Activated B cell treated with CpG ODN at 0.5 μM for 24 hours (primary cell): ENCODE measurements at regions of chr1 and their contacts with region 1.

Region 1: DNA sequence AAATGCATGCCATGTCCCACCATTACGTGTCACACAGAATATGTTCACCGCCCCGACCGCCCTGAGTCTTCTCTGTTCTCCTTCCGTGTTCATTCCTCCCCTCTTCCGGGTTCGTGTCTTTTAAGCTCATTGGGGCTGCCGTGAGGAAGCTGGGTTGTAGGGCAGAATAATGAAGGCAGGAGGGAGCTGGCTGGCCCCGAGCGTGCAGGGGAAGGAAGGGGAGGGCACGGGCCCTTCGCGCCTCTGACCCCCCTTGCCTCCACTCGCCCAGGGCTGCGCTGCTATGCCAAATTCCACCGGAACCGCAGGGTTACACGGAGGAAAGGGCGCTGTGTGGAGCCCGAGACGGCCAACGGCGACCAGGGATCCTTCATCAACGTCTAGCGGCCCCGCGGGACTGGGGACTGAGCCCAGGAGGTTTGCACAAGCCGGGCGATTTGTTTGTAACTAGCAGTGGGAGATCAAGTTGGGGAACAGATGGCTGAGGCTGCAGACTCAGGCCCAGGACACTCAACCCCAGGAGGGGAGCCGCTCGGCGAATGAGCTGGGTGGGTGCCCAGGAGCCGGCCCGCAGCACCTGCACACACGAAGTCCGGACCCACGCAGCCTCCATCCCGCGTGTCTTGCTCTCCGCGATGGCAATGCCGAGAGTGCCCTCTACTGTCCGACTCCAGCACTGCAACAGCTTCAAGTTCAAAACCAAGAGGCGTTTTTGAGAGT is 16.5 kb upstream of the AGTRAP start:
- DNase-seq: peak; percentile 78
- ATAC-seq: peak; percentile 89
- H3K4me3 Mint-ChIP-seq: peak overlapping the region; percentile 86
- H3K27ac Mint-ChIP-seq: peak overlapping the region; percentile 94
- H3K4me1 Mint-ChIP-seq: peaks cover 13% of the 10 kb centered on the region
- H3K27me3 Mint-ChIP-seq: no peaks in the 10 kb centered on the region
- CTCF ChIP-seq: peak; percentile 87

Region 2: GRCh38 chr1:11262171-11263049 is 457.1 kb before region 1 on chr1 and contains the start of gene MTOR:
- CTCF ChIA-PET with region 1: interaction called, 4 read pairs
- POLR2A ChIA-PET with region 1: interaction called, 9 read pairs
- intact Hi-C with region 1: loop called (anchors 2 kb)
- DNase-seq: peak; percentile 80
- ATAC-seq: peak; percentile 98
- H3K4me3 Mint-ChIP-seq: peak within 1 kb of the TSS; percentile 89
- H3K27ac Mint-ChIP-seq: peak within 1 kb of the TSS; percentile 87
- H3K4me1 Mint-ChIP-seq: peaks cover 16% of the 10 kb centered on the region
- H3K27me3 Mint-ChIP-seq: no peaks in the 10 kb centered on the region
- CTCF ChIP-seq: no peak
- total RNA-seq, gene MTOR: 49.9 and 55.1 TPM in 2 replicates

Region 3: DNA sequence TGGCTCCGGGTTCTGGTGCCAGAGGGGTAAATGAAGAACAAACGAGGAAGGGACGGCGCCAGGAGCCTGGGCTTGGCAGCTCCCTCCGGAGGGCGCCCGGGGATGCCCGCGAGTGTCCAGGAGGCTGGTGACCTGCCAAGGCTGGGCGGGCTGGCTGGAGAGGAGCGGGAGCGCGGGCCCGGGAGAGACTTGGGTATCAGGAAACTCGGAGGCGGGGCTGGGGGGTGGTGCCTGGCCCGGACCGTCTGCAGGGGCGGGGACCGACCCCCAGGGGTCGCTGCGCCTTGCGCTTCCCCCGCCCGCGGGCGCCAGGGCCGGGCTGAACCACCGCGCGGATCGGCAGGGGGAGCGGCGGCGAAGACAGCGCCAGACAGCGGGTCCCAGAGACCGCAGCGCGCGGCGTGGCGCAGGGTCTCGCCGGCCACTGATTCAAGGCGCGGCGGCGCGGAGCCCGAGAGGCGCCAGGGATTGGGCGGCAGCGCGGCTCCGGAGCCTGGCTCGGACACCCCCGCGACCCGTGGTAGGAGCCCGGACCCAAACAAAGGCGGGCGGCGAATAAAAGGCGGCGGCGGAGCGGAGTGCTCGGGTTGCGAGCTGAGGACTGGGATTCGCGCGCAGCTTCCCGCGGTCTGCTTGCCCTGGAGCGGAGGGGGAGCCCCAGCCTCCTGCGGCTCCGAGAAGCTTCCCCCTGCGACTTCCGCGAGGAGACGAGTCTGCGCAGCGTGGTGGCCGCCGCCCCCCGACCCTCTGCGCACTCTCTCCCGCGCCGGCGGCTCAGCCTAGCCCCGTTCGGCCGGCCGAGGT is 240.7 kb before region 1 on chr1 and contains the start of gene DISP3:
- CTCF ChIA-PET with region 1: no interaction called
- POLR2A ChIA-PET with region 1: interaction called, 3 read pairs
- intact Hi-C with region 1: loop called (anchors 10 kb)
- DNase-seq: peak; percentile 73
- ATAC-seq: peak; percentile 94
- H3K4me3 Mint-ChIP-seq: peak within 1 kb of the TSS; percentile 71
- H3K27ac Mint-ChIP-seq: no peak within 1 kb of the TSS
- H3K4me1 Mint-ChIP-seq: peaks cover 9% of the 10 kb centered on the region
- H3K27me3 Mint-ChIP-seq: peaks cover 49% of the 10 kb centered on the region
- CTCF ChIP-seq: no peak
- total RNA-seq, gene DISP3: 0.42 and 0.44 TPM in 2 replicates

Region 4: GRCh38 chr1:11654137-11654938 is 65.1 kb before region 1 on chr1 and contains the starts of genes FBXO2 and FBXO44:
- CTCF ChIA-PET with region 1: interaction called, 74 read pairs
- POLR2A ChIA-PET with region 1: interaction called, 36 read pairs
- intact Hi-C with region 1: loop called (anchors 1 kb)
- DNase-seq: peak; percentile 60
- ATAC-seq: peak; percentile 85
- H3K4me3 Mint-ChIP-seq: peak within 1 kb of the TSS; percentile 80
- H3K27ac Mint-ChIP-seq: no peak within 1 kb of the TSS
- H3K4me1 Mint-ChIP-seq: peaks cover 29% of the 10 kb centered on the region
- H3K27me3 Mint-ChIP-seq: no peaks in the 10 kb centered on the region
- CTCF ChIP-seq: no peak
- total RNA-seq, gene FBXO2: 4.2 and 4.6 TPM in 2 replicates
- total RNA-seq, gene FBXO44: 27.2 and 29.9 TPM in 2 replicates

Region 5: GRCh38 chr1:11681071-11681771 is 38.3 kb before region 1 on chr1 and contains the start of gene MAD2L2:
- CTCF ChIA-PET with region 1: interaction called, 11 read pairs
- POLR2A ChIA-PET with region 1: interaction called, 21 read pairs
- intact Hi-C with region 1: loop called (anchors 1 kb)
- DNase-seq: peak; percentile 93
- ATAC-seq: peak; percentile 90
- H3K4me3 Mint-ChIP-seq: peak within 1 kb of the TSS; percentile 92
- H3K27ac Mint-ChIP-seq: peak within 1 kb of the TSS; percentile 88
- H3K4me1 Mint-ChIP-seq: peaks cover 22% of the 10 kb centered on the region
- H3K27me3 Mint-ChIP-seq: no peaks in the 10 kb centered on the region
- CTCF ChIP-seq: no peak
- total RNA-seq, gene MAD2L2: 34.4 and 34.9 TPM in 2 replicates

Region 6: DNA sequence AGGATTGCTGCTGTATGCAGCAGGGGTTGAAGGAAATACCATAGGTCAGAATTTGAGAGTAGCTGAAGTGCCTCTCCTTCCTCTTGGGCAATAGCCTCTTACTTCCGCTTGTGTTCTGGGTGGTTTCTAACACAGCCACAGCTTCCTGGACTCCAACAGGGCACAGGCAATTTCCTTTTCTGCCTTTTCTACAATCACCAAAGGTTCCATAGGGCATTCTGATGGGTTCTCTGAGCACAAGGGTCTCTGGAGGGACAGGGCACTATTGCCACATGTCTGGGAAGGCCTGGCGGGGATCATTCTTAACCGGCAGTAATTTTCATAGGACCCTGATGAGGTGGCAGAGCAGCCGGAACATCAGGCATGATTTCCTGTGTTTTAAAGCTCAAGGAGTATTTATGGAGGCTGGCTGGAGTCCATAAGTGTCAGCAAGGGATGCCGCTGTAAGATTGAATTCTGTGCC is 11.0 kb after region 1 on chr1:
- CTCF ChIA-PET with region 1: interaction called, 16 read pairs
- POLR2A ChIA-PET with region 1: interaction called, 40 read pairs
- intact Hi-C with region 1: loop called (anchors 1 kb)
- DNase-seq: peak; percentile 21
- ATAC-seq: peak; percentile 93
- H3K4me3 Mint-ChIP-seq: peak overlapping the region; percentile 83
- H3K27ac Mint-ChIP-seq: peak overlapping the region; percentile 93
- H3K4me1 Mint-ChIP-seq: peaks cover 40% of the 10 kb centered on the region
- H3K27me3 Mint-ChIP-seq: no peaks in the 10 kb centered on the region
- CTCF ChIP-seq: no peak

Region 7: GRCh38 chr1:11749203-11749689 is 29.8 kb after region 1 on chr1:
- CTCF ChIA-PET with region 1: interaction called, 4 read pairs
- POLR2A ChIA-PET with region 1: no interaction called
- intact Hi-C with region 1: loop called (anchors 1 kb)
- DNase-seq: peak; percentile 27
- ATAC-seq: peak; percentile 99
- H3K4me3 Mint-ChIP-seq: no peak overlapping the region
- H3K27ac Mint-ChIP-seq: peak overlapping the region; percentile 36
- H3K4me1 Mint-ChIP-seq: peaks cover 6% of the 10 kb centered on the region
- H3K27me3 Mint-ChIP-seq: no peaks in the 10 kb centered on the region
- CTCF ChIP-seq: no peak